Ascending aorta (tissue), 2 donors: ENCODE measurements at regions of chr2 and their contacts with region 1.

Region 1: GRCh38 chr2:177212106-177212890 is at the start of gene HNRNPA3:
- DNase-seq: peak; percentile 96 to 99
- H3K4me3 ChIP-seq: peak within 1 kb of the TSS; percentile 78 to 99
- H3K27ac ChIP-seq: peak within 1 kb of the TSS; percentile 97 to 100
- H3K4me1 ChIP-seq: peaks cover 20 to 35% of the 10 kb centered on the region in 2 donors
- H3K27me3 ChIP-seq: no peaks in the 10 kb centered on the region
- CTCF ChIP-seq: peak; percentile 10 to 32 (median 11)
- total RNA-seq, gene HNRNPA3: 32.9 TPM

Region 2: GRCh38 chr2:177195194-177195593 is 17.1 kb before region 1 on chr2:
- intact Hi-C with region 1: no loop called
- DNase-seq: no peak
- H3K4me3 ChIP-seq: no peak overlapping the region
- H3K27ac ChIP-seq: no peak overlapping the region
- H3K4me1 ChIP-seq: no peaks in the 10 kb centered on the region
- H3K27me3 ChIP-seq: no peaks in the 10 kb centered on the region
- CTCF ChIP-seq: no peak

Region 3: DNA sequence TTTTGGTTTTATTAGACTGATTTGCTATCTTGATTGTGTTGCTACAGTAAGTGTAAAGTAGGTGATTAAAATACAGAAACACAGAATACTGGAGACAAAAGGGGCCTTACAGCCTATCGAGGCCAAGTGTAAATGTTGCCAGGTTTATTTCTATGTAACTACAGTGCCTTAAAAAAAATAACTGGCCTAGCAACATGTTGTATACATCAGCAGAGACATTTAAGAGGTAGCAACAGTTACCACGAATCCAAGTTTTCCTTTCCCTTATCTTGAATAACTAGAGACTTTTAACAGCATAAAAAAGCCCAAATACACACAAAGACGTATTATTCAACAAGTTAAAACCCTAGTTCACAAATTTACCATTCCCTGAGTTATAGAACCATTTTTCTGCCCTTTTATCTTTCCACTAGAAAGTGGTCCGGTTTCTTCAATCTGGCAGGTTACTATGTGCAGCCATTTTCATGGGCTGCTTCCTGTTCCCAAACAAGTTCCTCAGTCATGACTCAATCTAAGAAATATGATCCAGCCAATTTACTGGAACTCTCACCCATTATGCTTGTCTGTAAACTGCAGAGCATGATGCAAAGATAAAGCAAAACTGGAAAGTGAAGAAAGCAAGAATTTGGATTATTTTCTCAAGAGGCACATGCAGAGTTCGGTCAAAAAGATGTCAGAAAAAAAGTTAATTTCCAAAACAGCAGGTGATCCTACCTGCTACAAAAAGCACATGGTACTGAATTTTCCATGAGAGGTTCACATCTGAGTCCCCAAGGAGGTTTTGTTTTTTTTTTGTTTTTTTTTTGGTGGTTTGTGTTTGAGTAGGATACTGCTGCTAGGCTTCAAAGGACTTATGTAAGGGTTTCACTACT is 30.1 kb after region 1 on chr2:
- intact Hi-C with region 1: loop called (anchors 2 kb)
- DNase-seq: no peak
- H3K4me3 ChIP-seq: peak overlapping the region; percentile 23 to 34
- H3K27ac ChIP-seq: peak overlapping the region; percentile 90 to 94
- H3K4me1 ChIP-seq: peaks cover 30 to 86% of the 10 kb centered on the region in 2 donors
- H3K27me3 ChIP-seq: no peaks in the 10 kb centered on the region
- CTCF ChIP-seq: no peak

Region 4: DNA sequence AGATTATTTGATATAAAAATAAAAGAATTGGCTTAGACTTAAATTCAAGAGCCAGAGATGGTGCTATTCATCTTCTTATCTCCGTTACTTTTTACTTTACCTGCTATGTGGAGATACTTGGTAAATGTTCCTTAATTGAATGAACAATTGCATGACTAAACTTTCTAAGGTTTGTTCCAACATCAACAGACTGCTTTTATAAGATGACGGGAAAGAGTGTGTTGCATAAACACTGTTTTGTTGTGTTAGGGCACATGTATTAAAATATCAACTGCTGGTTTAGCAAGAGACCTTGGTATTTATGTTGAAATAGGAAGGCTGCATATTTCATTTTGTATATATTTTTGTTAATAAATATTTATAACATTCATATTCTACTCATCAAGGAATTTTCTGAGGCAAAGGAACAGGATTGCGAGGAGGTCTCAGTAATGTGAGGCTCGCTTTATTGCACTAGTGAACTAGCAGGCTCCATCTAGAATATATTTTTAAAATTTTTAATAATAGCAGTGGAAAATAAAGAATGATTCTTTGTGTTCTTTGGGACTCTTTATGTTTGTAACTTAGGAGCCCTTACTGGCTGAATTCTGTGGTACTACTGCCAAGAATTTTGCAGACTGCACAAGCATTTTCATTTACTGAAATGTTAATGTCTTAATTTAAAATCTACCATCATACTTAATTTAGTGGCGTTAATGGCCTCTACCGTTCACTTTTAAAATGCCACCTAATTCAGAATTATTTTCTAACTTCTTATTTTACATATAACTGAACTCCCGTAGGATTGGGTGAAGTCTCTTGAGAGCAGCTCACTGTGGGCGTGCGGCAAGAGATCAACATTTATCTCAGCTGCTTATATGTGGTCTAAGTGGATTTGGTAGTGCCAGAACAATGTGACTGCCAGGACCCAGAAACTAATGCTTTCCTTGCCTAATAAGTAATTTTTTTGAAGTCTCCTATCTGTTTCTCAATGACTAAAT is 63.0 kb after region 1 on chr2:
- intact Hi-C with region 1: loop called (anchors 5 kb)
- DNase-seq: no peak
- H3K4me3 ChIP-seq: peak overlapping the region; percentile 27 to 46
- H3K27ac ChIP-seq: peak overlapping the region; percentile 65 to 79
- H3K4me1 ChIP-seq: peaks cover 0 to 21% of the 10 kb centered on the region in 2 donors
- H3K27me3 ChIP-seq: no peaks in the 10 kb centered on the region
- CTCF ChIP-seq: no peak

Region 5: DNA sequence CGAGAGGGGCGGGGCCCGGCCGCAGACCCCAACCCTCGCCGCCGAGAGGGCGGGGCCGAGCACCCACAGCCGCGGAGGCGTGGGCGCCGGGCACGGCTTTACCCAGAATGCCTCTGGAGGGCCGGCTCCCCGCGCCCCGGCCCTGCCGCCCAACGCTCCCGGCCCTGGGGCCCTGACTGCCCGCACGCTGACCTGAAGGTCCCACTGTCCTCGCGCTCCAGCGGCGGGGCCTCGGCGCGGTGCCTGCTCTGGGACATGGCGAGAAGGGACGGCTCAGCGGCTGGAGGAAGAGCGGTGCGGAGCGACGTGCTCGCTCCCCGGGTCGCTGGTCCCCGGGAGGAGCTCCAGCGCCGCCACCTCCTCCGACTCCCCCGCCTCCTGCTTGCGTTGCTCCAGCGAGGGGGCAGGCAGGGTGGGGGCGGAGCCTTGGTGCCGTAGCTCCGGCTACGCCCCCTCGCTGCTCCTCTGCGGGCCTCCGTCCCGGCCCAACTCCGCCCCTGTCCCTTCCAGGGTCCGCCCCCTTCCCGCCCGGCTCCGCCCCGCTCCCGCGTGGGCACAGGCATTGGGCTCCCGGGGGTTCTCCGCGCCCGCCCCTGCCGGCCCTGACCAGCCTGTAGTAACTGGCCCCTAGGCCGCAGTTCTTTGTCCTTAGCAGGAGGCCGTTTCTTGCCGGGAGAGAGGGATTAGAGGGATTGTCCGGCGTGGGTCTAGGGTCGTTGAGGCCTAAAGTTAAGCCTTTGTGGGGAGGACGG is 1238.7 kb after region 1 on chr2 and contains the starts of genes PJVK and PRKRA:
- intact Hi-C with region 1: loop called (anchors 5 kb)
- DNase-seq: peak; percentile 91 to 98
- H3K4me3 ChIP-seq: peak within 1 kb of the TSS; percentile 93 to 96
- H3K27ac ChIP-seq: peak within 1 kb of the TSS; percentile 98 to 99
- H3K4me1 ChIP-seq: peaks cover 7 to 20% of the 10 kb centered on the region in 2 donors
- H3K27me3 ChIP-seq: no peaks in the 10 kb centered on the region
- CTCF ChIP-seq: no peak
- total RNA-seq, gene PJVK: not detected
- total RNA-seq, gene PRKRA: 75.5 TPM